ENCODE measurements at regions of chr16 and their contacts with region 1.

Region 1: GRCh38 chr16:85010931-85011845 is at the start of gene ZDHHC7:
- DNase-seq: peak; percentile 93
- ATAC-seq: peak; percentile 92
- H3K4me3 ChIP-seq: peak within 1 kb of the TSS; percentile 83 to 96 (median 95)
- H3K4me3 Mint-ChIP-seq: peak within 1 kb of the TSS; percentile 91
- H3K27ac ChIP-seq: peak within 1 kb of the TSS; percentile 94 to 97
- H3K27ac Mint-ChIP-seq: peak within 1 kb of the TSS; percentile 96
- H3K4me1 ChIP-seq: peaks cover 12 to 19% of the 10 kb centered on the region in 2 donors
- H3K4me1 Mint-ChIP-seq: peaks cover 37% of the 10 kb centered on the region
- H3K27me3 ChIP-seq: no peaks in the 10 kb centered on the region
- H3K27me3 Mint-ChIP-seq: peaks cover 10% of the 10 kb centered on the region
- CTCF ChIP-seq: no peak
- total RNA-seq, gene ZDHHC7: 35.6 and 36.1 TPM in 2 replicates

Region 2: DNA sequence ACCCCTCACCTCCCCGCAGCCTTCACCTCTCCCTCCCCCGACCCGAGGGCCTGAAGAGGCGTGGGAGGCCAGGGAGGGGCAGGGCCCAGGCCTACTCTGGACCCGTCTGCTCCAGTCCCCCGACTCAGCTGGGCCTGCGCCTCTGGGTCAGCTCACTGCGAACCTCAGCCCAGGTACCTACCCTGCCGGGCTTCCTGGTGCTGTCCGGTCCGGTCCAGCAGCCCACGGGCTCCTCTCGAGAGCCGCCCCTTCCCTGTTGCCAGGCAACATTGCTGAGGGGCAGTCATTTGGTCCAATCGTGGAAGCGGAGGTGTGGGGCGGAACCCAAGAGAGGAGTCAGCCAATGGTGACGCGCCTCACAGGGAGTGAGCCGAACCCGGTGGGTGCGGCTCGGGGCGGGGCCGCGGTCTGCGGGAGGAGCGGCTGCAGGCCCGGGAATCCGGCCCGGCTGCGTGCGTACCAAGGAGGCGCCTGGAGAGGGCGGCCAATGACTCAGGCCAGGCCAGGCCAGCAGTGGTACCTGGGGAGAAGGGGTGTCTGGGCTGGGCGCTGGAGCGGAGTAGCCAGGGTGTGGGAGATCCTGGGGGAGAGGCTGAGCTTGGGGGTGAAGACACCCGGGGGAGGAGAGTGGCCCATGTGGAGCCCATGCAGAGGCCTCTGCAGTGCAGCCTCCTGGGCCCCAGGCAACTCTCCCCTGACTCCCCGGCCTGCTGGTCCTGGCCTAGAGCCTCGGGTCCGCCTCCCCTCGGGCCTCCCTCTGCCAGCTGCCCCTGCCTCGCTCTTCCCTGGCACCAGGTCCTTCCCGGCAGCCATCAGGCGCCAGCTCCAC is 506.6 kb before region 1 on chr16 and contains the start of gene MEAK7:
- CTCF ChIA-PET with region 1: no interaction called
- POLR2A ChIA-PET with region 1: no interaction called
- intact Hi-C with region 1: loop called (anchors 5 kb)
- DNase-seq: peak; percentile 98
- ATAC-seq: peak; percentile 97
- H3K4me3 ChIP-seq: peak within 1 kb of the TSS; percentile 63 to 88 (median 77)
- H3K4me3 Mint-ChIP-seq: peak within 1 kb of the TSS; percentile 95
- H3K27ac ChIP-seq: peak within 1 kb of the TSS; percentile 47 to 65
- H3K27ac Mint-ChIP-seq: peak within 1 kb of the TSS; percentile 90
- H3K4me1 ChIP-seq: peaks cover 33 to 44% of the 10 kb centered on the region in 2 donors
- H3K4me1 Mint-ChIP-seq: peaks cover 49% of the 10 kb centered on the region
- H3K27me3 ChIP-seq: no peaks in the 10 kb centered on the region
- H3K27me3 Mint-ChIP-seq: no peaks in the 10 kb centered on the region
- CTCF ChIP-seq: no peak
- total RNA-seq, gene MEAK7: 19.3 and 23.0 TPM in 2 replicates

Region 3: DNA sequence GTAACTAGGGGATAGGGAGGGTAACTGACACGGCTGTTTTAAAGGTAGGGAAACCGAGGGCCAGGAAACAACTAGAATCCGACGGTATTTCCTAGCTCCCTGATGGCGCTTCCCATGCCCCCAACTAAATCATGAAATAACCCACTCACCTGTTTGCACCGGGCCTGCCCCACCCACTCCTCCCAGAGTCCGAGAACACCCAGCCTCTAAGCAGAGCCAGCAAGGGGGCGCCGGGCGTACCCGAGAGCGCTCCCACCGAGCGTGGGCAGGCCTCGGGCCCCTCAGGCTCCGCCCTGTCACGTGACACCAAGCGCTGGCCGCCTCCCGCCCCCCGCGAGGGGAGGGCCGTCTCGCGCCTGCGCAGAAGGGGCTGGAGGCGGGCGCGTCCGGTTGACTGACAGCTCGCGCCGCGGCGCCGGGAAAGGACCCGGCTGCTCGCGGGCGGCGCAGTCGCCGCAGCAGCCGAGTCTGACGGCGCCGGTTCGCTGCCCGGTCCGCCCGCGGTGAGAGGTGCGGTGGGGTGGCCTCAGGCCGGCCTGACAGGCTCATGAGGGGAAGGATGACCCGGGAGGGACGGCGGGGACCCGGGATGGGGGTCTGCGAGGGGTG is 16.3 kb after region 1 on chr16 and contains the start of gene KIAA0513:
- CTCF ChIA-PET with region 1: interaction called, 22 read pairs
- POLR2A ChIA-PET with region 1: interaction called, 4 read pairs
- intact Hi-C with region 1: loop called (anchors 1 kb)
- DNase-seq: peak; percentile 96
- ATAC-seq: peak; percentile 92
- H3K4me3 ChIP-seq: peak within 1 kb of the TSS; percentile 57 to 84 (median 80)
- H3K4me3 Mint-ChIP-seq: peak within 1 kb of the TSS; percentile 94
- H3K27ac ChIP-seq: peak within 1 kb of the TSS; percentile 52 to 75
- H3K27ac Mint-ChIP-seq: peak within 1 kb of the TSS; percentile 89
- H3K4me1 ChIP-seq: peaks cover 28 to 33% of the 10 kb centered on the region in 2 donors
- H3K4me1 Mint-ChIP-seq: peaks cover 42% of the 10 kb centered on the region
- H3K27me3 ChIP-seq: peaks cover 0 to 6% (median 2%) of the 10 kb centered on the region in 4 experiments
- H3K27me3 Mint-ChIP-seq: peaks cover 13% of the 10 kb centered on the region
- CTCF ChIP-seq: no peak
- total RNA-seq, gene KIAA0513: 1.1 and 1.7 TPM in 2 replicates

Region 4: DNA sequence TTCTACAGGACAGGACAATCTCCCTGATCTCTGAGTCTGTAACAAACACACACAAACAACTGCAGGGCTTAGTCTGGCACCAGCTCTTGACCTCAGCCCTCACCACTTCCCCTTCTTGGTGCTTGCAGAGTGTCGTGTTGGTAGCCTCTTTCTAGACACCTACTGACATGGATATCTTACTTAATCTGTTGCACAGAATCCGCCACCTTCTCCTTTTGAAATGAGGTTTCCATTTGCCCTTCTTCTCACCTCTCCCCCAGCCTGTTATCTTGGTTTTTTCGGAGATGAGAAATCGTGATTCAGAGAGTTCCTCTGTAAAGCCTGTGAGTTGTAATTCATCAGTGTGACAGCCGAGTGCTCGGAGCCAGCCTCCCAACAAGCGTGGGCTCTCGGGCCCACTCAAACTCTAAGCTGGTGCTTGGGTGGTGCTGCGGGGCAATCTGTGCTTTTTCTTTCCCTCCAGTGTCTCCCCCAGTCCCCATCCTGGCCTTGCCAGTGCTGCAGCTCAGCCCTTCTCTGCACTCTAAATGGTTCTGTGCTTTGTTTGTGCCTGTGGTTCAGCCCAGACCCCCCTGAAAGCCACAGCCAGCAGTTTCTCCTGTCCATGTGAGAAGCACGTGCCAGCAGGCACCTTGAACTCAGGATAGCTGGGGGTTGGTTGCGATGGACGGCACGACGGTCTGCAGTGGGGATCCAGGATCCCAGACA is 44.5 kb after region 1 on chr16:
- CTCF ChIA-PET with region 1: interaction called, 4 read pairs
- POLR2A ChIA-PET with region 1: no interaction called
- intact Hi-C with region 1: loop called (anchors 2 kb)
- DNase-seq: peak; percentile 83
- ATAC-seq: peak; percentile 95
- H3K4me3 ChIP-seq: peak overlapping the region; percentile 20 to 42 (median 34)
- H3K4me3 Mint-ChIP-seq: peak overlapping the region; percentile 83
- H3K27ac ChIP-seq: peak overlapping the region; percentile 35 to 59
- H3K27ac Mint-ChIP-seq: peak overlapping the region; percentile 83
- H3K4me1 ChIP-seq: peaks cover 38 to 41% of the 10 kb centered on the region in 2 donors
- H3K4me1 Mint-ChIP-seq: peaks cover 38% of the 10 kb centered on the region
- H3K27me3 ChIP-seq: peaks cover 0 to 3% (median 1%) of the 10 kb centered on the region in 4 experiments
- H3K27me3 Mint-ChIP-seq: peaks cover 13% of the 10 kb centered on the region
- CTCF ChIP-seq: no peak

Region 5: GRCh38 chr16:85114909-85115567 is 103.8 kb after region 1 on chr16:
- CTCF ChIA-PET with region 1: no interaction called
- POLR2A ChIA-PET with region 1: no interaction called
- intact Hi-C with region 1: loop called (anchors 1 kb)
- DNase-seq: peak; percentile 76
- ATAC-seq: peak; percentile 88
- H3K4me3 ChIP-seq: peak overlapping the region in 4 of 5 experiments; percentile 25 to 49 (median 38)
- H3K4me3 Mint-ChIP-seq: peak overlapping the region; percentile 84
- H3K27ac ChIP-seq: no peak overlapping the region
- H3K27ac Mint-ChIP-seq: peak overlapping the region; percentile 72
- H3K4me1 ChIP-seq: peaks cover 0 to 8% of the 10 kb centered on the region in 2 donors
- H3K4me1 Mint-ChIP-seq: peaks cover 8% of the 10 kb centered on the region
- H3K27me3 ChIP-seq: no peaks in the 10 kb centered on the region
- H3K27me3 Mint-ChIP-seq: no peaks in the 10 kb centered on the region
- CTCF ChIP-seq: peak; percentile 92